Endothelial cell of umbilical vein (primary cell): ENCODE measurements at regions of chr11 and their contacts with region 1.

Region 1: DNA sequence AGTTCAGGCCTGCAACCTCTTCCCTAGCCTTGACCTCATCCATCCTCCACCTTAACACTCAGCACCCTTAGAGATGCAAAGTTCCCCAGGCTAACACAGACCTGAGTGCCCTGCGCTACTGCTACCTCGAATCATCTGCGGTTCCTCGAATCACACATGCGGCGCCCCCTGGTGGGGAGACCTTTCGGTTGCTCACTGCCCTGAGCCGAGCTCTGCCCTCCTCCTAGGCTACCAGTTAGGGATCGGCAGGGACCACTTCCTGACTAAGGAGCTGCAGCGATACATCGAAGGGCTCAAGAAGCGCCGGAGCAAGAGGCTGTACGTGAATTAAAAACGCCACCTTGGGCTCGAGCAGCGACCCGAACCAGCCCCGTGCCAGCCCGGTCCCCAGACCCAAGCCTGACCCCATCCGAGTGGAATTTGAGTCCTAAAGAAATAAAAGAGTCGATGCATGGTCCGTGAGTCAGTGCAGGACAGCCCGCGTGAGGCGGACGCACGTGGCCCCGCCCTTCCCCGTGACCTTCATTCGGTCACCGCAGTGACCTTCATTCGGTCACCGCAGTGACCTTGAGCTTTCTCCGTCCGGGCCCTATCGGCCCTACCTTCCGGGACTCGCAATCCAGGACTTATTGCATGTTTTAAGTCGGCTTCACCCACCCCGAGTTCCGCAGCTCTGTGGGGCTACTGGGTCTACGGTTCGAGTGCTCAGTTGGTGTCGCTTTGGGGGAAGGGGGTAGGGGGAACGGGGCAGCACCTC is 830 bp upstream of the ESRRA start:
- DNase-seq: peak; percentile 85
- H3K4me3 ChIP-seq: peak overlapping the region; percentile 14 to 57 (median 39)
- H3K27ac ChIP-seq: peak overlapping the region; percentile 49
- H3K4me1 ChIP-seq: peaks cover 21% of the 10 kb centered on the region
- H3K27me3 ChIP-seq: peaks cover 4 to 11% of the 10 kb centered on the region in 2 experiments
- CTCF ChIP-seq: peak; percentile 91 to 92
- POLR2A ChIP-seq: peak; percentile 35

Region 2: DNA sequence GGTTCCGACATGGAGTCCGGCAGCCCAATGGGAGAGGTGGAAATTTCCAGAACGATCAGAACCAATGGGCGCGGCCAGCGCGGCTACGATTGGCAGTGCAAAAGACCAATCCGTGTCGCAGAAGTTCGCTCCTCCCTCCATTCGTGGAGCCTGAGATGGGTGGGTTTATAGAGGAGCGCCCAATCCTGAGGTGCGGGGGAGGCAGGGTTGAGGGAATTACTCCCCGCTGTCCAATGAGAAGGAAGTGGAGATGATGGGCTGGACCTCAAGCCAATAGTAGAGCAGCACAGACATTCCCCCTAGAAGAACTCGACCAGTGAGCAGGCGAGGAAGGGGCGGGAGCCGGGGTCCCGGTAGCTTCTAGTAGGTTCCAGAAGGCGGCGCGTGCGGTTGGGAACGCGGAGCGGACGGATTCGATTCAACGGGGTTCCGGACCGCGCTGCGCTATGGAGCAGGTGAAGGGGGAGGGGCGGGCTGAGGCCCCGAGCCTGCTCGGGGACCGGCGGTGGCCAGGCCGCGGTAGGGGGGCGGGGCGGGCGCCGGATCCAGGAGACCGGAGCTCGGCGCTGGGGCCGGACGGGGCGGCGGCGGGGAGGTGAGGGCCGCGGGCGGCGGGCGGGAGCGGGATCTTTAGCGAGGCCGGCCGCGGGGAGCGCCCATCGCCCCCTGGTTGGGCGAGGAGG is 118.5 kb before region 1 on chr11 and contains the start of gene STIP1:
- CTCF ChIA-PET with region 1: interaction called, 24 read pairs
- POLR2A ChIA-PET with region 1: no interaction called
- dilution Hi-C with region 1: no loop called
- intact Hi-C with region 1: loop called (anchors 1 kb)
- DNase-seq: peak; percentile 100
- H3K4me3 ChIP-seq: peak within 1 kb of the TSS; percentile 17 to 65 (median 56)
- H3K27ac ChIP-seq: peak within 1 kb of the TSS; percentile 64
- H3K4me1 ChIP-seq: peaks cover 14% of the 10 kb centered on the region
- H3K27me3 ChIP-seq: no peaks in the 10 kb centered on the region
- CTCF ChIP-seq: peak; percentile 30 to 67
- POLR2A ChIP-seq: no peak
- total RNA-seq, gene STIP1: 223 and 226 TPM in 2 replicates

Region 3: GRCh38 chr11:64233913-64234834 is 70.3 kb before region 1 on chr11 and contains the start of gene VEGFB:
- CTCF ChIA-PET with region 1: interaction called, 10 read pairs
- POLR2A ChIA-PET with region 1: no interaction called
- dilution Hi-C with region 1: no loop called
- intact Hi-C with region 1: no loop called
- DNase-seq: peak; percentile 48
- H3K4me3 ChIP-seq: peak within 1 kb of the TSS; percentile 48 to 63 (median 51)
- H3K27ac ChIP-seq: no peak within 1 kb of the TSS
- H3K4me1 ChIP-seq: peaks cover 10% of the 10 kb centered on the region
- H3K27me3 ChIP-seq: no peaks in the 10 kb centered on the region
- CTCF ChIP-seq: no peak
- POLR2A ChIP-seq: no peak
- total RNA-seq, gene VEGFB: 89.6 and 98.1 TPM in 2 replicates

Region 4: GRCh38 chr11:64263021-64263946 is 41.2 kb before region 1 on chr11:
- CTCF ChIA-PET with region 1: interaction called, 57 read pairs
- POLR2A ChIA-PET with region 1: no interaction called
- dilution Hi-C with region 1: no loop called
- intact Hi-C with region 1: no loop called
- DNase-seq: peak; percentile 85
- H3K4me3 ChIP-seq: no peak overlapping the region
- H3K27ac ChIP-seq: peak overlapping the region; percentile 83
- H3K4me1 ChIP-seq: peaks cover 35% of the 10 kb centered on the region
- H3K27me3 ChIP-seq: no peaks in the 10 kb centered on the region
- CTCF ChIP-seq: no peak
- POLR2A ChIP-seq: peak; percentile 56

Region 5: DNA sequence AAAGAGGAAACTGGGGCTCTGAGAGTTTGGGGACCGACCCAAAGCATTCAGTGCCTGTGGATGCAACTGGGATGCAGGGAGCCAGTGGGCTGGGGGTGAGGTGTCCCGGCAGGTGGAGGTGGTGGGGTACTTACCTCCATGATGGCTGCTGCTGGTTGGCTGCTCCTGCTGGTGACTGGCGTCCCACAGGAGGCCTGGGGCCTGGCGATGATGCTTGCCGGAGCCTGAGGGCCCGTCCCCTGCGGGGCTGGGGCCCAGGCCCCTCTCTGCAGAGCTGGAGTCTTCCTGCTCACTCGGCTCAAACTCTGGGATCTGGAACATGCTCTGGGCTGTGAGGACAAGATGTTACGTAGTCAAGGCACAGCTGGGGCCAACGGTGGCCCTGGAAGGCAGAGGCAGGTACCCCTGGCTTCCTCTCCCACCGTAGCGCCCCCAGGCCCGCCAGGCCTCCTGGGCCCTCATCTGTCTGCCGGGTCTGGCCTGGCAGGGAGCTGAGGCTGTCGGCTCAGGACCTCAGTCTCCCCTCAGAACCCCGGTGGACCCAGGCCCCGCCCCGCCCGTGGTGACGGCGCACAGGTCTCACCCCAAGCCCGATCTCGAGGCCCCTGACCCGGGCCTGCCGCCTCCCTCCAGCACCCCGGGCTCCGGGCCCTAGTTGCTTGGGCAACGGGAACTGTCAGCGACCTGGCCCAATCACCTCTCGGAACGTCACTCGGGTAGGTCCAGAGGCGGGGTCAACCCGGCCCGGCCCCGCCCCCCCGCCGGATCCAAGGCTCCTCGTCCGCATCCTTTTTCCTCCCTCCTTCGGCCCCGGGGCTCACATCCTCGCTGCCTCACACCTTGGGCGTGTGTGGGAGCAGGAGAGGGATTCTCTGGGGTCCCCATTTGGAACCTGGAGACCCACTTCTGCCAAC is 20.2 kb before region 1 on chr11 and contains the start of gene BAD:
- CTCF ChIA-PET with region 1: interaction called, 26 read pairs
- POLR2A ChIA-PET with region 1: no interaction called
- dilution Hi-C with region 1: no loop called
- intact Hi-C with region 1: loop called (anchors 2 kb)
- DNase-seq: peak; percentile 91
- H3K4me3 ChIP-seq: peak within 1 kb of the TSS; percentile 42 to 49 (median 44)
- H3K27ac ChIP-seq: peak within 1 kb of the TSS; percentile 35
- H3K4me1 ChIP-seq: peaks cover 11% of the 10 kb centered on the region
- H3K27me3 ChIP-seq: no peaks in the 10 kb centered on the region
- CTCF ChIP-seq: no peak
- POLR2A ChIP-seq: peak; percentile 52
- total RNA-seq, gene BAD: 61.6 and 65.3 TPM in 2 replicates

Region 6: GRCh38 chr11:64331557-64332371 is 27.3 kb after region 1 on chr11:
- CTCF ChIA-PET with region 1: interaction called, 63 read pairs
- POLR2A ChIA-PET with region 1: no interaction called
- dilution Hi-C with region 1: no loop called
- intact Hi-C with region 1: no loop called
- DNase-seq: peak; percentile 74
- H3K4me3 ChIP-seq: no peak overlapping the region
- H3K27ac ChIP-seq: no peak overlapping the region
- H3K4me1 ChIP-seq: peaks cover 3% of the 10 kb centered on the region
- H3K27me3 ChIP-seq: no peaks in the 10 kb centered on the region
- CTCF ChIP-seq: peak; percentile 64 to 82
- POLR2A ChIP-seq: no peak

Region 7: GRCh38 chr11:64583296-64584232 is 279.1 kb after region 1 on chr11:
- CTCF ChIA-PET with region 1: no interaction called
- POLR2A ChIA-PET with region 1: no interaction called
- dilution Hi-C with region 1: no loop called
- intact Hi-C with region 1: no loop called
- DNase-seq: no peak
- H3K4me3 ChIP-seq: no peak overlapping the region
- H3K27ac ChIP-seq: no peak overlapping the region
- H3K4me1 ChIP-seq: no peaks in the 10 kb centered on the region
- H3K27me3 ChIP-seq: peaks cover 0 to 3% of the 10 kb centered on the region in 2 experiments
- CTCF ChIP-seq: no peak
- POLR2A ChIP-seq: no peak